IMR-90 (cell line): ENCODE measurements at regions of chr1 and their contacts with region 1.

Region 1: GRCh38 chr1:67110352-67110751 is 24.4 kb downstream of the C1orf141 start:
- DNase-seq: no peak
- ATAC-seq: no peak
- H3K4me3 ChIP-seq: no peak overlapping the region
- H3K27ac ChIP-seq: no peak overlapping the region
- H3K4me1 ChIP-seq: no peaks in the 10 kb centered on the region
- H3K27me3 ChIP-seq: no peaks in the 10 kb centered on the region
- CTCF ChIP-seq: no peak
- POLR2A ChIP-seq: no peak
- RAD21 ChIP-seq: no peak

Region 2: GRCh38 chr1:66978201-66978600 is 132.2 kb before region 1 on chr1:
- CTCF ChIA-PET with region 1: no interaction called
- POLR2A ChIA-PET with region 1: no interaction called
- dilution Hi-C with region 1: no loop called
- in situ Hi-C with region 1: no loop called
- intact Hi-C with region 1: no loop called
- DNase-seq: no peak
- ATAC-seq: no peak
- H3K4me3 ChIP-seq: no peak overlapping the region
- H3K27ac ChIP-seq: no peak overlapping the region
- H3K4me1 ChIP-seq: no peaks in the 10 kb centered on the region
- H3K27me3 ChIP-seq: no peaks in the 10 kb centered on the region
- CTCF ChIP-seq: no peak
- POLR2A ChIP-seq: no peak
- RAD21 ChIP-seq: no peak

Region 3: GRCh38 chr1:67060811-67061218 is 49.5 kb before region 1 on chr1:
- CTCF ChIA-PET with region 1: no interaction called
- POLR2A ChIA-PET with region 1: no interaction called
- dilution Hi-C with region 1: no loop called
- in situ Hi-C with region 1: no loop called
- intact Hi-C with region 1: loop called (anchors 10 kb)
- DNase-seq: peak; percentile 99
- ATAC-seq: peak; percentile 85
- H3K4me3 ChIP-seq: no peak overlapping the region
- H3K27ac ChIP-seq: peak overlapping the region; percentile 91
- H3K4me1 ChIP-seq: peaks cover 21% of the 10 kb centered on the region
- H3K27me3 ChIP-seq: no peaks in the 10 kb centered on the region
- CTCF ChIP-seq: no peak
- POLR2A ChIP-seq: no peak
- RAD21 ChIP-seq: no peak

Region 4: GRCh38 chr1:67227196-67227595 is 116.8 kb after region 1 on chr1:
- CTCF ChIA-PET with region 1: no interaction called
- POLR2A ChIA-PET with region 1: no interaction called
- dilution Hi-C with region 1: no loop called
- in situ Hi-C with region 1: no loop called
- intact Hi-C with region 1: no loop called
- DNase-seq: no peak
- ATAC-seq: no peak
- H3K4me3 ChIP-seq: no peak overlapping the region
- H3K27ac ChIP-seq: no peak overlapping the region
- H3K4me1 ChIP-seq: no peaks in the 10 kb centered on the region
- H3K27me3 ChIP-seq: peaks cover 5% of the 10 kb centered on the region; the same call in 1 of the 2 replicates
- CTCF ChIP-seq: no peak
- POLR2A ChIP-seq: no peak
- RAD21 ChIP-seq: no peak